HCT116 (cell line): ENCODE measurements at regions of chr4 and their contacts with region 1.

Region 1: DNA sequence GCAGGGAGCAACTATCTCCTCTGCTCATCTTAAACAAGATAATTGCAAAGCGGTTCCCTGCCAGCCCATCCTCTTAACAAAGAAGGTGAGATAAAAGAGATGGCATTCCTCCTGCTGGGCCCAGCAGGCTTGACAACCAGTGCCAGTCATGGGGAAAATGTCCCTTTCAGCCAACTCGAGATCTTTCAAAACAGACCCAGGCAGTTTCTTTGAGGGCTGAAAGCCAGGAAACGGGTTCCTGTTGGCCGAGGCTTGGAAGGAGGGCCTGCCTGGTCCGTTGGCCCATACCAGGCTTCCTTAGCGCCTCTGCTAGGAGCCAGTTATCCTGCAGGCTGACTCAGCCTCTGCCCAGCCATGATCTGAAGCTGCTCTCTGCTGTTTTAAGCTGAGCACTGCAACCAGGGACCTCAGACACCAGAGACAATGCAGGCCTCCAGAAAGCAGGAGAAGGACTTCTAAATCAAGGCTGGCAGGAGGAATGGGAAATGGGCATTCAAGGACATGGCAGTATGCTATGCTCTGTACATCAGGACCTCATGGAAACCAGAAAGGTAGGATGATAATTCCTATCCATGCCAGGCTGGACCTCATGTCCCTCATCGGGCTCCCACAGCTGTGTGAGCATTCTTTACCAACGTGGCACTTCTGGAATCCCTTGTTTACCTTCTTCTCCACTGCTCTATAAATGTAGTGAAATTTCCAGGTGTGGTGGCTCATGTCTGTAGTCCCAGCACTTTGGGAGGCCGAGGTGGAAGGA is 42.4 kb upstream of the SLC2A9 start:
- DNase-seq: peak; percentile 13
- ATAC-seq: peak; percentile 93
- H3K4me3 ChIP-seq: no peak overlapping the region
- H3K27ac ChIP-seq: no peak overlapping the region
- H3K4me1 ChIP-seq: 0 out of 4 replicates have a peak, but pooled peaks cover 0 to 3% of the 10 kb centered on the region in 2 experiments
- H3K27me3 ChIP-seq: no peaks in the 10 kb centered on the region
- CTCF ChIP-seq: peak; percentile 49 to 93 (median 59)
- POLR2A ChIP-seq: no peak
- RAD21 ChIP-seq: peak; percentile 80

Region 2: DNA sequence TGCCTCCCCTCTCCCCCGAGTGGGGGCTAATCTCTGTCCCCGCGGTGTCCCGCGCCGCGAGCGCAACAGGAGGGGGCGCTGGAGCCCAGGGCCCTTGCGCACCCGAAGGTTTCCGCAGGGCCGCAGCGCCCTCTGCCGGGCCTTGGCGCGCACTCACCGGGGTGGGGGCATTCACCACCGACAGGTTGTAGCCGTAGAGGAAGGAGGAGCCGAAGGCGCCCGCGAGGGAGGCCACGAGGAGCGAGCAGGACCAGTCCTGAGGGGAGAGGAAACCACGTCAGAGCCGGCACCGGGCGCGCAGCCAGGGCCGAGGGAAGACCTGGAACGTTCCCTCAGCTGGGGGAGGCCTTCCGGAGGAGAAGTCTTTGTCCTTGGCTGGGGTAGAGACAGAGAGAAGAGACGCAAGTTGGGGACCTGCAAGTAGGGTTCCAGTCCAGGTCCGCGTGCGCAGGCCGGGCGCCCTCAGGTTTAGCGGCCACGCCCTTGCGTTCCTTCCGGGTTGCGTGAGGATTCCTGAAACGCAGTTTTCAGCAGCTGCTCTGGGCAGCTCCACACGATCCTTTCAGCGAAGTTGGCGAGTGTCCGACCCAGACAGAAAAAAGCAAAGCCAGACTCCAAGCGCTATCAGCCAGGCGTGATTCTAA is 44.8 kb before region 1 on chr4:
- CTCF ChIA-PET with region 1: interaction called, 8 read pairs
- POLR2A ChIA-PET with region 1: no interaction called
- RAD21 ChIA-PET with region 1: no interaction called
- intact Hi-C with region 1: loop called (anchors 1 kb)
- DNase-seq: peak; percentile 88
- ATAC-seq: peak; percentile 98
- H3K4me3 ChIP-seq: peak overlapping the region; percentile 49 to 55
- H3K27ac ChIP-seq: peak overlapping the region; percentile 53
- H3K4me1 ChIP-seq: peaks cover 6 to 18% of the 10 kb centered on the region in 2 experiments; a peak in 3 of 4 replicates
- H3K27me3 ChIP-seq: no peaks in the 10 kb centered on the region
- CTCF ChIP-seq: peak in 2 of 3 experiments; percentile 99 to 100; a peak in 4 of 6 replicates
- POLR2A ChIP-seq: peak; percentile 62
- RAD21 ChIP-seq: no peak